Left lung (tissue), 14 donors: ENCODE measurements at regions of chr18 and their contacts with region 1.

Region 1: DNA sequence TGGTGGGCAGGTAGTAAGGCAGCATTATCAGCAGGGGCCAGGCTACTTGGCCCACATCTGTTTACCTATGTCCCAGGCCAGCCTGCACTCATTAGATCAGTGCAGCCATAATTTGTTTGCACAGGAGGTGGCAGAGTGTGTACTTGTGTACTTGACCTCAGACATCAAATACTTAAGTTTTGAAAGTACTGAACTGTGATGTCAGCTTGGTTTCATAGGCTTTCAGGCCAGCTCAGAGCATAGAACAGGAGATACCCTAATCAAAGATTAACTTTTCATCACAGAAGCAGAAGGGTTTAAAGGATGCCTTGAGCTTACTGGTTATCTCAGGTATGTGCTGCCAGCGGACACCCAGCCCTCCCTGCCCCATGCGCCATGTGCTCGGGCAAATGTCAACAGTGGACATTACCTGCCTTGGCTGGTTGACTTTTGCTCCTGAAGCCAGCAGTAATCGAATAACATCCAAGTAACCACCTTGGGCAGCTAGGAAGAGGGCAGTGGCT is 33.2 kb downstream of the ANKRD29 start:
- DNase-seq: peak; percentile 35 to 81 (median 71)
- ATAC-seq: peak; percentile 91
- H3K4me3 ChIP-seq: no peak overlapping the region
- H3K27ac ChIP-seq: peak overlapping the region in 1 of 2 donors; percentile 71
- H3K4me1 ChIP-seq: no peaks in the 10 kb centered on the region
- H3K27me3 ChIP-seq: no peaks in the 10 kb centered on the region
- CTCF ChIP-seq: no peak

Region 2: GRCh38 chr18:23503038-23503962 is 126.2 kb before region 1 on chr18 and contains the start of gene RMC1:
- intact Hi-C with region 1: no loop called
- DNase-seq: peak; percentile 95 to 100 (median 97)
- ATAC-seq: peak; percentile 96
- H3K4me3 ChIP-seq: peak within 1 kb of the TSS; percentile 80 to 98
- H3K27ac ChIP-seq: peak within 1 kb of the TSS; percentile 91 to 97
- H3K4me1 ChIP-seq: peaks cover 10 to 67% of the 10 kb centered on the region in 2 donors
- H3K27me3 ChIP-seq: no peaks in the 10 kb centered on the region
- CTCF ChIP-seq: no peak
- polyA plus RNA-seq, gene RMC1: 23.5 to 29.3 (median 25.4) TPM

Region 3: GRCh38 chr18:23924813-23925212 is 295.3 kb after region 1 on chr18:
- intact Hi-C with region 1: loop called in 1 of 2 experiments (anchors 10 kb)
- DNase-seq: no peak
- ATAC-seq: no peak
- H3K4me3 ChIP-seq: no peak overlapping the region
- H3K27ac ChIP-seq: no peak overlapping the region
- H3K4me1 ChIP-seq: no peaks in the 10 kb centered on the region
- H3K27me3 ChIP-seq: peaks cover 0 to 5% of the 10 kb centered on the region in 2 donors
- CTCF ChIP-seq: no peak